Activated CD4-positive, alpha-beta memory T cell treated with anti-CD3 and anti-CD28 coated beads, Interleukin-2, amount 10 ng/mL, durations not matched to agents 7 days and 5 days (primary cell): ENCODE measurements at regions of chr11 and their contacts with region 1.

Region 1: DNA sequence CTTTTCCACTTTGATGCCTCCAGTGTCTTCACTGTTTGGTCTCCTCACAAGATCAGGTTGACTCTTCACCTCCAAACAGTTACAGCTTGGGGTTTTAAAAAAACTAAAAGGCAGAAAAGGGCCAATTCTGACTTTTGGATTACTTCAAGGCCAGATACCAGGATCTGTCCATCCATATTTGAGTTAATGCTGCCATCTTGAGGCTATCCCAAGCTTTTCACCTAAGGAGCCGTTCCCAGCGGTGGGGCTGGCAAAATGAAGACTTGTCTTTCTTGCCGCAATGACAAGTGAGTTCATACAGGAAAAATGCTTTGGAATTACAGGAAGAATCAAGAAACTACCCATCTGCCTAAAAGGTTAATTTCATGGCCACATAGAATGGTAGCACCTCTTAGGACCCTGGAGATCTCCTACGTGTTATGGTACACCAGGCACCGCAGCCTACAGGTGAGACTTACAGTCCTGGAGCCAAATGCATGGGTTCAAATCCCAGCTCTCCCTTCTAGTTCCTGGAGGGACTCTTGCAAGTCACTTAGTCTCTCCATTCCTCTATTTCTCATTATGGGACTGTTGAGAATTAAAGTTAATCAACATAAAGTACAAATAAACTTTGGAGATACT is 6.0 kb upstream of the OR5B21 start:
- DNase-seq: no peak
- H3K4me3 Mint-ChIP-seq: no peak overlapping the region
- H3K27ac Mint-ChIP-seq: no peak overlapping the region
- H3K4me1 Mint-ChIP-seq: no peaks in the 10 kb centered on the region
- H3K27me3 Mint-ChIP-seq: no peaks in the 10 kb centered on the region

Region 2: GRCh38 chr11:58524232-58525036 is 10.6 kb after region 1 on chr11:
- CTCF ChIA-PET with region 1: interaction called, 10 read pairs
- POLR2A ChIA-PET with region 1: no interaction called
- DNase-seq: peak; percentile 39
- H3K4me3 Mint-ChIP-seq: no peak overlapping the region
- H3K27ac Mint-ChIP-seq: peak overlapping the region; percentile 74
- H3K4me1 Mint-ChIP-seq: peaks cover 29% of the 10 kb centered on the region
- H3K27me3 Mint-ChIP-seq: no peaks in the 10 kb centered on the region